Endothelial cell of umbilical vein (primary cell): ENCODE measurements at regions of chr13 and their contacts with region 1.

Region 1: GRCh38 chr13:94620286-94620896 is 18.7 kb downstream of the GPR180 start:
- DNase-seq: peak; percentile 52
- H3K4me3 ChIP-seq: no peak overlapping the region
- H3K27ac ChIP-seq: no peak overlapping the region
- H3K4me1 ChIP-seq: peaks cover 6% of the 10 kb centered on the region
- H3K27me3 ChIP-seq: no peaks in the 10 kb centered on the region
- CTCF ChIP-seq: peak; percentile 62 to 68
- POLR2A ChIP-seq: no peak

Region 2: GRCh38 chr13:94362411-94362909 is 257.9 kb before region 1 on chr13:
- CTCF ChIA-PET with region 1: interaction called, 10 read pairs
- POLR2A ChIA-PET with region 1: no interaction called
- dilution Hi-C with region 1: no loop called
- intact Hi-C with region 1: loop called (anchors 2 kb)
- DNase-seq: peak; percentile 84
- H3K4me3 ChIP-seq: no peak overlapping the region
- H3K27ac ChIP-seq: no peak overlapping the region
- H3K4me1 ChIP-seq: no peaks in the 10 kb centered on the region
- H3K27me3 ChIP-seq: no peaks in the 10 kb centered on the region
- CTCF ChIP-seq: peak; percentile 69 to 76
- POLR2A ChIP-seq: no peak

Region 3: GRCh38 chr13:94435604-94436226 is 184.7 kb before region 1 on chr13:
- CTCF ChIA-PET with region 1: interaction called, 415 read pairs
- POLR2A ChIA-PET with region 1: no interaction called
- dilution Hi-C with region 1: no loop called
- intact Hi-C with region 1: loop called (anchors 1 kb)
- DNase-seq: peak; percentile 43
- H3K4me3 ChIP-seq: no peak overlapping the region
- H3K27ac ChIP-seq: no peak overlapping the region
- H3K4me1 ChIP-seq: no peaks in the 10 kb centered on the region
- H3K27me3 ChIP-seq: peaks cover 15 to 18% of the 10 kb centered on the region in 2 experiments
- CTCF ChIP-seq: peak; percentile 27 to 35
- POLR2A ChIP-seq: no peak

Region 4: GRCh38 chr13:94601446-94602431 is 18.7 kb before region 1 on chr13 and contains the start of gene GPR180:
- CTCF ChIA-PET with region 1: interaction called, 57 read pairs
- POLR2A ChIA-PET with region 1: no interaction called
- dilution Hi-C with region 1: no loop called
- intact Hi-C with region 1: no loop called
- DNase-seq: peak; percentile 99
- H3K4me3 ChIP-seq: peak within 1 kb of the TSS; percentile 66 to 94 (median 92)
- H3K27ac ChIP-seq: peak within 1 kb of the TSS; percentile 68
- H3K4me1 ChIP-seq: peaks cover 11% of the 10 kb centered on the region
- H3K27me3 ChIP-seq: no peaks in the 10 kb centered on the region
- CTCF ChIP-seq: no peak
- POLR2A ChIP-seq: peak; percentile 85
- total RNA-seq, gene GPR180: 8.3 and 8.9 TPM in 2 replicates

Region 5: DNA sequence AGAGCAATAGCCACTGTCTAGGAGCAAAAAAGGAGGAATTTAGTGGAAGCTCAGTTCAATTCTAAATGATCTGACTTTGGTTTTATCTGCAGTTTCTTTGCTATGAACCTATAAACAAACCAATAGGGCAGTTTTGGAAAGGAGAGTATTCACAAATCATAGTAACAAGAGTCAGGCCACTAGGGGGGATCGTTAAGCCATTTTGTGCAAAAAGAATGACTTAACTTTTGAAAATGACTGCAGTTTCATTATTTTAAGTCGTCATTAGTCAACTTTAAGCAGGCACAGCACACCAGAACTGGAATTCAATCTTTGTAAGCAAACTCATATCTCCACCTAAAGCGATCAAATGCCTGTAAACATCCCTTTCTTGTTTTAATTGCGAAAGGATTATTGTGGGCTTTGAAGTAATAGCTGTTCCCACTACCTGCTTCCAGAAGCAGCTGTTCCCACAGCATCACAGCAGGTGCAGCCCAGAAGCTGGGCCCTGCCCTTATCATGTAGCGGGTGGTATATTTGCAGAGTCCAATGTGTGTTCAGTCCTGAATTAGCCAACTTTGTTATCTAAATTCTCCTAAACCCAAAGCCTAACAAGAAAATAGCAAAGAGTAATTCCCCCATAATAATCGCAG is 40.4 kb after region 1 on chr13:
- CTCF ChIA-PET with region 1: interaction called, 8 read pairs
- POLR2A ChIA-PET with region 1: no interaction called
- dilution Hi-C with region 1: no loop called
- intact Hi-C with region 1: loop called (anchors 2 kb)
- DNase-seq: peak; percentile 36
- H3K4me3 ChIP-seq: no peak overlapping the region
- H3K27ac ChIP-seq: no peak overlapping the region
- H3K4me1 ChIP-seq: peaks cover 25% of the 10 kb centered on the region
- H3K27me3 ChIP-seq: peaks cover 0 to 3% of the 10 kb centered on the region in 2 experiments
- CTCF ChIP-seq: peak; percentile 19 to 36
- POLR2A ChIP-seq: no peak